MCF 10A (cell line): ENCODE measurements at regions of chr17 and their contacts with region 1.

Region 1: DNA sequence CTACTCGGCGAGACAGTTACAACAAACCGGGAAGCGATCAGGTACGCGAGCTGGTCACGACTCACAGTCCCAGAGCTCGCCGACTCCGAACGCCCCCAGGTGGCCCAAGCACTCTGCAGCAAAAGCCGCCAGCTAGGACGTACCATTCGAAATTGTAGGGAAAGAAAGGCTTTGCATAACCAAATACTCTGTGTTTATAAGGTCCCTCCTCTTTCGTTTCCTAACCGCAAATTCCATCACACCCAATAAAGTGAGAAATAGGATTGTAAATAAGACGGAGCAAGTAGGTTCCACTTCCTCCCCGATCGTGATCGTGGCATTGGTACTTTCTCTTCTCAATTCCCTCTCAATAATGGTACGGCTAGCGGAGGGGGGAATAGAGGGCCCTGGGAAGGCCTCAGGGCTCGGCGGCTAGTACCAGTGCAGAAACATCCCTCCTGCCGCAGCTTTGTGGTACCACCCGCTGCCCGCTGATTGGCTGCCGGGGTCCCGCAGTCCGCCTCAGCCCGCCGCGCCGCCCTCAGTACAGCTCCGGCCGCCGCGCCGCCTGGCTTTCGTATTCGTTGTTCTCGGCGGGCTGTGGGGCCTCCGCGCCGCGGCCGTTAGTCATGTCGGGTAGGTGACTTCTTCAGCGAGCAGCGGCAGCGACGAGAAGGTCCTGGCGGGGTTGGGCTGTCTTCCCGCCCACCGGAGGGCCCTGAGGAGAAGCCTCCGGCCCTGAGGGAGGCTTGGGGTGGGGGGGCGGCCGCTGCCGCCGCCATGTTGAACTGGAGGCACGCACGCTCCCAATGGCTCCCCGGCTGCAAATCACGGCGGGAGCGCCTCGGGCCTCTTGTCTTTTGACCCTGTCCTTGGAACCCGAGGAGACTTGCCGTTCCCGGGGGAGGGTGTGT is at the start of gene TAF15:
- DNase-seq: peak; percentile 99
- H3K4me3 Mint-ChIP-seq: peak within 1 kb of the TSS; percentile 92
- H3K27ac Mint-ChIP-seq: peak within 1 kb of the TSS; percentile 89
- H3K4me1 Mint-ChIP-seq: peaks cover 30% of the 10 kb centered on the region
- H3K27me3 Mint-ChIP-seq: no peaks in the 10 kb centered on the region
- CTCF ChIP-seq: peak; percentile 33
- total RNA-seq, gene TAF15: 284 and 337 TPM in 2 replicates

Region 2: GRCh38 chr17:35189291-35189690 is 619.9 kb before region 1 on chr17:
- CTCF ChIA-PET with region 1: no interaction called
- POLR2A ChIA-PET with region 1: no interaction called
- intact Hi-C with region 1: no loop called
- DNase-seq: peak; percentile 58
- H3K4me3 Mint-ChIP-seq: no peak overlapping the region
- H3K27ac Mint-ChIP-seq: no peak overlapping the region
- H3K4me1 Mint-ChIP-seq: peaks cover 4% of the 10 kb centered on the region
- H3K27me3 Mint-ChIP-seq: peaks cover 12% of the 10 kb centered on the region
- CTCF ChIP-seq: no peak

Region 3: DNA sequence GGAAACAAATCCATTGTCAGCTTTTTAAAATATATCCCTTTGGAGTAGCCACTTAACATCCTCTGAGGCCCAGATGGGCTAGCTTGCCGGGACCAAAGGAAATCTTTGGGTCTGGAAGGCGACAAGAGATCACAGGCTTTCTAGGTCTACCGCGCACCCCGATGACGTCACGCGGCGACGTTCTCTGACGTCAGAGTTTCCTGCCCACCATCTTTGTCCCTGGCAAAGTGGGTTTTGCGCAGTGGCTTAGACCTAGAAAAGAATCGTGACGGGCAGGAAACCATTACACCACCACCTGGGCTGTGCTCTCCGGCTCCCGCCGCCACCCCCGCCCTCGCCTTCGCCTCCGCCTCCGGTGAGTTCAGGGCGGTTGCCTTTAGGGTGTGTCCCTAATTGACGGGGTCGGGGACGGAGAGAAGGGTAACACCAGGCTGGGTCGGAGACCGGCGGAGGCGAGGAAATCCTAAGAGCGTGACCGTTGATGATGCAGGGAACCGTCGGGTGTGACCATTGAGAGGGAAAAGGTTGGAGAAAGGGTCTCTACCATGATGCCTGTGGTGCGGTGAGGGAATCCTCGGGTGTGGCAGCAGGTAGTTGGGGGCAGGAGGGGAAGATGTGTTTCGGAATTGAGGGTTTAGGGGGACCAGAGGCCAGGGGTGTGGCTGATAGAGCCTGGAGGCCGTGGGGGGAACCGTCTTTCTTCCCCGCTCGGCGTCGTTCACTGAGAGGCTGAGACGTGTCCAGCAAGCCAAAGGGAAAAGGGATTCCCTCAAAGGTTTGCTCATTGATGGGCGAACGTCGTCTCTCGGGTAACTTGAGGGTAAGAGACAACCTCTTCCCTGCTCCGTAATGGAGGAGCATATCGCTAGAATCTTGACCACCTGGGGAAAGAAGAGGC is 221.9 kb before region 1 on chr17 and contains the start of gene AP2B1:
- CTCF ChIA-PET with region 1: interaction called, 3 read pairs
- POLR2A ChIA-PET with region 1: interaction called, 20 read pairs
- intact Hi-C with region 1: no loop called
- DNase-seq: peak; percentile 95
- H3K4me3 Mint-ChIP-seq: peak within 1 kb of the TSS; percentile 97
- H3K27ac Mint-ChIP-seq: peak within 1 kb of the TSS; percentile 99
- H3K4me1 Mint-ChIP-seq: peaks cover 18% of the 10 kb centered on the region
- H3K27me3 Mint-ChIP-seq: no peaks in the 10 kb centered on the region
- CTCF ChIP-seq: no peak
- total RNA-seq, gene AP2B1: 227 and 229 TPM in 2 replicates

Region 4: GRCh38 chr17:35651467-35651866 is 157.7 kb before region 1 on chr17:
- CTCF ChIA-PET with region 1: no interaction called
- POLR2A ChIA-PET with region 1: no interaction called
- intact Hi-C with region 1: no loop called
- DNase-seq: no peak
- H3K4me3 Mint-ChIP-seq: no peak overlapping the region
- H3K27ac Mint-ChIP-seq: no peak overlapping the region
- H3K4me1 Mint-ChIP-seq: no peaks in the 10 kb centered on the region
- H3K27me3 Mint-ChIP-seq: no peaks in the 10 kb centered on the region
- CTCF ChIP-seq: no peak

Region 5: GRCh38 chr17:35716897-35717465 is 92.2 kb before region 1 on chr17:
- CTCF ChIA-PET with region 1: interaction called, 12 read pairs
- POLR2A ChIA-PET with region 1: interaction called, 5 read pairs
- intact Hi-C with region 1: no loop called
- DNase-seq: no peak
- H3K4me3 Mint-ChIP-seq: peak overlapping the region; percentile 4
- H3K27ac Mint-ChIP-seq: no peak overlapping the region
- H3K4me1 Mint-ChIP-seq: peaks cover 14% of the 10 kb centered on the region
- H3K27me3 Mint-ChIP-seq: no peaks in the 10 kb centered on the region
- CTCF ChIP-seq: no peak

Region 6: GRCh38 chr17:35764123-35764991 is 44.9 kb before region 1 on chr17:
- CTCF ChIA-PET with region 1: interaction called, 684 read pairs
- POLR2A ChIA-PET with region 1: interaction called, 489 read pairs
- intact Hi-C with region 1: loop called (anchors 1 kb)
- DNase-seq: peak; percentile 87
- H3K4me3 Mint-ChIP-seq: peak overlapping the region; percentile 75
- H3K27ac Mint-ChIP-seq: peak overlapping the region; percentile 87
- H3K4me1 Mint-ChIP-seq: peaks cover 13% of the 10 kb centered on the region
- H3K27me3 Mint-ChIP-seq: no peaks in the 10 kb centered on the region
- CTCF ChIP-seq: peak; percentile 92

Region 7: DNA sequence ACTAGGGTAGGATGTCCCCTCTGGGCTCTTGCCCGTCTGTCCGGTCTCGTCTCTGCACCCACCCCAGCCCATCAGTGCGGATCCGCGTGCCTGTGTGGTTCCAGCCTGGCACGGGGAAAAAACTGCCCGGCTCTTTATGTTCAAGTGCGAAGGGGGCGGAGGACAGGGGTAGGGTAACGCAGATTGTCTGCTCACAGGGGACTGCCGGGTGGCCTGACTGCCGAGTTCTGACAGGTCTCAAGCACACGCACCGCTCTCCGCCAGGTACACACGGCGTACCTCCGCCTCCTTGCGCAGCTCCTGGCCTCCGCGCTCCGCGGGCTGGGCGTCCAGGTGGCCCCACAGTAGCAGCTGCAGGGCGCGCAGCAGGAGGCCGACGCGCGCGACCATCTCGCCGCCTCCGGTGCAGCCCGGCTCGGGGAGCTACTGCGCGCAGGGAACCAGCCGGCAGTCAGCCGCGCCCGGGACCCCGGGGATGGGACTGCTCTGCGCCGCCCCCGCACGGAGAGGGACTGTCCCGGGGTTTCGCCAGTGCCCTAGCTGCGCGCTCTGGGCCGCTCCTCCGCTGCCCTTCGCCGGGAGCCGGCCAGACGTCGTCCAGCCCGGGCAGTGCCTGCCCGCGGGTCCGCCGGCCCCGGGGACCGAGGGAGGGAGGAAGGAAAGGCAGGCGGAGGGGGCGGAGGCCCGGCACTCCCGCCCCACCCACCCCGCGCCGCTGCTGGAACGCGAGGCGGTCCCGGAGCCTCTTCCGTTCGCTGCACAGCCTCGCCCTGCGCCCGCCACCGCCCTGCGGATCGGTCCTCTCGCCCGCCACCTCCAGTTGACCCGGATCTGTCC is 14.0 kb before region 1 on chr17 and contains the start of gene MMP28:
- CTCF ChIA-PET with region 1: interaction called, 13 read pairs
- POLR2A ChIA-PET with region 1: interaction called, 489 read pairs
- intact Hi-C with region 1: no loop called
- DNase-seq: peak; percentile 53
- H3K4me3 Mint-ChIP-seq: peak within 1 kb of the TSS; percentile 72
- H3K27ac Mint-ChIP-seq: peak within 1 kb of the TSS; percentile 20
- H3K4me1 Mint-ChIP-seq: peaks cover 42% of the 10 kb centered on the region
- H3K27me3 Mint-ChIP-seq: no peaks in the 10 kb centered on the region
- CTCF ChIP-seq: no peak
- total RNA-seq, gene MMP28: 22.3 and 27.4 TPM in 2 replicates

Region 8: GRCh38 chr17:35870906-35871819 is 62.0 kb after region 1 on chr17:
- CTCF ChIA-PET with region 1: no interaction called
- POLR2A ChIA-PET with region 1: no interaction called
- intact Hi-C with region 1: no loop called
- DNase-seq: no peak
- H3K4me3 Mint-ChIP-seq: no peak overlapping the region
- H3K27ac Mint-ChIP-seq: no peak overlapping the region
- H3K4me1 Mint-ChIP-seq: peaks cover 5% of the 10 kb centered on the region
- H3K27me3 Mint-ChIP-seq: no peaks in the 10 kb centered on the region
- CTCF ChIP-seq: no peak